CD4-positive, alpha-beta T cell (primary cell): ENCODE measurements at regions of chr2 and their contacts with region 1.

Region 1: DNA sequence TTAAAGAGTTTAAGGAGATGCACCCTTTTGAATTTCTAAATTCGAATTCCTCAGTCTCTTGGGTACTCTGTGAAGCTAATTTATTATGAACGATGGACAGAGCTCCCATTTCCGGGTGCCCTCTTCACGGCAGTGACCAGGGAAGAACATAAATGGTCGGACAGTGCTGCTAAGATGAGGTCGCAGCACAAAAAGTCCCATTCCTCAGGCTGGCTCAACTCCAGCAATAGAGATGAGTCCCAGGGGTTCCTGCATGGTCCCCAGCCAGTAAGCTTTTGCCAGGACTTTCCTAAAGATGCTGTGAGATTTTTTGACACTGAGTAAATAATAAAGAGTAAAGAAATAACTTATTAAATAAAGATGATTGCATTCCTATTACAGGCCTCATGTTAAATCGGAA is 43.0 kb upstream of the STK39 start:
- DNase-seq: no peak
- ATAC-seq: no peak
- H3K4me3 ChIP-seq: no peak overlapping the region
- H3K4me3 Mint-ChIP-seq: no peak overlapping the region
- H3K27ac ChIP-seq: no peak overlapping the region
- H3K27ac Mint-ChIP-seq: no peak overlapping the region
- H3K4me1 ChIP-seq: no peaks in the 10 kb centered on the region
- H3K4me1 Mint-ChIP-seq: no peaks in the 10 kb centered on the region
- H3K27me3 ChIP-seq: no peaks in the 10 kb centered on the region
- H3K27me3 Mint-ChIP-seq: no peaks in the 10 kb centered on the region
- CTCF ChIP-seq: no peak

Region 2: GRCh38 chr2:168136392-168136977 is 153.9 kb before region 1 on chr2:
- CTCF ChIA-PET with region 1: no interaction called
- POLR2A ChIA-PET with region 1: no interaction called
- intact Hi-C with region 1: no loop called
- DNase-seq: peak in 3 of 14 experiments; percentile 57 to 59 (median 58)
- ATAC-seq: peak; percentile 57
- H3K4me3 ChIP-seq: no peak overlapping the region
- H3K4me3 Mint-ChIP-seq: no peak overlapping the region
- H3K27ac ChIP-seq: no peak overlapping the region
- H3K27ac Mint-ChIP-seq: no peak overlapping the region
- H3K4me1 ChIP-seq: no peaks in the 10 kb centered on the region
- H3K4me1 Mint-ChIP-seq: peaks cover 5% of the 10 kb centered on the region
- H3K27me3 ChIP-seq: no peaks in the 10 kb centered on the region
- H3K27me3 Mint-ChIP-seq: no peaks in the 10 kb centered on the region
- CTCF ChIP-seq: peak; percentile 82

Region 3: DNA sequence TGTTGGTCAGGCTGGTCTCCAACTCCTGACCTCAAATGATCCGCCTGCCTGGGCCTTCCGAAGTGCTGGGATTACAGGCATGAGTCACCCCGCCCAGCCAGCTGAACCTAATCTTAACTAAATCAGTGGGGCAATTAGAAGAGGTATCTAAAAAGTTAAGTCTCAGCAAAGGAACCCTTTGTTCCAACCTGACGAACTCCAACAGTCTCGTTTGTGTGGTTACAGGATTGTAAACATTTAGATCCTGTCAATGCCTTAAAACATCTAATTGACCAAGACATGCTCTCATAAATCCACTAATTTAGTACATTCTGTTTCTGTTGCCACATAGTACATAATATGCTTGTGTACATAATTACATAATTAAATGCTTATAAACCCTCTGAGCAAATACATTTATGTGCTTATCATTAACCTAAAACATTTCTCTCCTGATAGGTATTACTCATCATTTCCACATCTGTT is 11.9 kb before region 1 on chr2:
- CTCF ChIA-PET with region 1: no interaction called
- POLR2A ChIA-PET with region 1: no interaction called
- intact Hi-C with region 1: loop called (anchors 1 kb)
- DNase-seq: no peak
- ATAC-seq: no peak
- H3K4me3 ChIP-seq: no peak overlapping the region
- H3K4me3 Mint-ChIP-seq: no peak overlapping the region
- H3K27ac ChIP-seq: no peak overlapping the region
- H3K27ac Mint-ChIP-seq: no peak overlapping the region
- H3K4me1 ChIP-seq: no peaks in the 10 kb centered on the region
- H3K4me1 Mint-ChIP-seq: no peaks in the 10 kb centered on the region
- H3K27me3 ChIP-seq: peaks cover 0 to 4% of the 10 kb centered on the region in 2 experiments
- H3K27me3 Mint-ChIP-seq: no peaks in the 10 kb centered on the region
- CTCF ChIP-seq: no peak